Natural killer cell (primary cell): ENCODE measurements at regions of chr2 and their contacts with region 1.

Region 1: DNA sequence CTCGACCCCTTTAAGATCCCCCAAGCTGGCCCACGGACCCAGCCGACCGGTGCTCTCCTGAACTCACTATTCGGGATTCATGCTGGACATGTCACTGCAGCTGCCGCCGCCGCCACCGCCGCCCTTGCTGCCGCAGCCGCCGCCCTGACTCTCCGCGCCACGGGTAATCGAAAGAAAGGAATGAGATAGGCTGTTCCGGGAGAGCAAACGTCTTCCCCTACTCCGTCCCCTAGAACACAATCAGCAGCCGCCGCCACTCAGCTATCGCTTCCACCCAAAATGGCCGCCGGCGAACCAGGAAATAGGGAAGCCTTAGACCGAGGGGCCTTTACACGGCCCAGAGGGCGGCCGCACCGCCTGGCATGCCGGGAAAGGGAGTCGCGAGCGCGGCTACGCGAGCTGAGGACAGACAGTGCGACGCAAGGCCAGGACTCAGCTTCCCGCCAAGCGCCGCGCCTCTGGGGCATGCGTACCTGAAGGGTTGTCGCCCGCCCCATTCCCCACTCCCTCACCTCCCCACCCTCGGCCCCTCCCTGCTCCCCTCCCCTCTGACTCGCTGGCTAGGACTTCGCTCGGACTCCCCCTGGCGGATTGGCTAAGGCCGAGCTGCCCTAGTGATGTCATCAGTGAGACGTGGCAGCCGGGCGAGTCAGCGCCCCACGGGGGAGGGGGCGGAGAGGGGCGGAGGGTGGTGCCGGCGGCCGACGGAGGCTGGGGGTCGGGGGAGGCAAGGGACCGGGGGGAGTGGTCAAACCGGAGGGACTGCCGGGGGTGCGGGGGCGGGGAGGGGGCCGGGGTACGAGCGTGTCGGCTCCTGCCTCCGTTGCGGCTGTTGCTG is at the start of gene RAB1A:
- DNase-seq: peak; percentile 95 to 100
- ATAC-seq: peak; percentile 87 to 96 (median 87)
- H3K4me3 ChIP-seq: peak within 1 kb of the TSS; percentile 84
- H3K4me3 Mint-ChIP-seq: peak within 1 kb of the TSS; percentile 100
- H3K27ac ChIP-seq: peak within 1 kb of the TSS; percentile 94
- H3K27ac Mint-ChIP-seq: peak within 1 kb of the TSS; percentile 99
- H3K4me1 ChIP-seq: peaks cover 30% of the 10 kb centered on the region
- H3K4me1 Mint-ChIP-seq: peaks cover 38 to 47% of the 10 kb centered on the region in 2 donors
- H3K27me3 ChIP-seq: no peaks in the 10 kb centered on the region
- H3K27me3 Mint-ChIP-seq: no peaks in the 10 kb centered on the region
- CTCF ChIP-seq: peak; percentile 9
- total RNA-seq, gene RAB1A: 83.5 to 101 (median 93.6) TPM

Region 2: GRCh38 chr2:64439194-64439593 is 690.9 kb before region 1 on chr2:
- intact Hi-C with region 1: no loop called
- DNase-seq: no peak
- ATAC-seq: no peak
- H3K4me3 ChIP-seq: no peak overlapping the region
- H3K4me3 Mint-ChIP-seq: no peak overlapping the region
- H3K27ac ChIP-seq: no peak overlapping the region
- H3K27ac Mint-ChIP-seq: no peak overlapping the region
- H3K4me1 ChIP-seq: no peaks in the 10 kb centered on the region
- H3K4me1 Mint-ChIP-seq: no peaks in the 10 kb centered on the region
- H3K27me3 ChIP-seq: peaks cover 2% of the 10 kb centered on the region
- H3K27me3 Mint-ChIP-seq: peaks cover 29% of the 10 kb centered on the region in 2 donors
- CTCF ChIP-seq: no peak

Region 3: DNA sequence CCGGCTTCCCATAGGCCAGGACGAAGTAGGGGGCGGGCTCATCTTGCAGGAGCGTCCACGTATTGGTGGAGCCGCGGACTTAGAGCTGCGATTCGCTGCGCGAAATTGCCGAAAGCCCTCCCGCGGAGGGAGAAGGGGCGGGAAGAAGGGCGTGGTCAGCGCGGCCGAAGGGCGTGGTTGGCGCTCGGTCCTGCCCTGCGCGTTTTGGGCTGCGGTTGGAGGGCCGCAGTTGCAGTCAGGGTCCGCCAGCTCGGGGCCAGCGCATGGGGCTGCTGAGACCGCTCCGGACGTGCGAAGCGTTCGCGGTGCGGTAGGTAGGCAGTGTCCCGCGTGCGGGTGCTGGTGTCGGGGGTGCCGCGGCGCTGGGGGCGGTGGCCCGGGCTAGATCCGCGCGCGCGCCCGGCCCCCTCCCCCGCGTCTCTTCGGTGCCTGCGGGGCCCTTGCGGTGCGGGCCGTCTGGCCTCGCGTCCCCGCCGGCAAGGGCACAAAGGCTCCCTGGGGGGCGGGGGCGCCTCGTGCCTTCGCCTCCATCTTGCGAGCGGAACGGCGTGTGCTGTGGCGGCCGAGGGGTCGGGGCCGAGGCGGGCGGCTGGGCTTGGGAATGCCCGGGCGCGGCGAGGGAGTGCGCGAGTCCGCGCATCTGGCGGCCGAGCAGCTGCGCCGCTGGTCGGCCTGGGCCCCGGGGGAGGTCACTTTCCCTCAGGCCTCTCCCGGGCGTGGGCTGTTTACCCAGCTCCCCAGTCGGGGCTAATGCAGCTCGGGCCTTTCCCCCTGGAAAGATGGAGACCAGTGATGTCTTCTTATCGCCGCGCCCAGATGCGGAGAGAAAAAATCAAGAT is 73.6 kb before region 1 on chr2 and contains the start of gene CEP68:
- intact Hi-C with region 1: loop called (anchors 2 kb)
- DNase-seq: peak; percentile 59 to 95
- ATAC-seq: peak; percentile 95 to 99 (median 95)
- H3K4me3 ChIP-seq: peak within 1 kb of the TSS; percentile 71
- H3K4me3 Mint-ChIP-seq: peak within 1 kb of the TSS; percentile 97
- H3K27ac ChIP-seq: peak within 1 kb of the TSS; percentile 68
- H3K27ac Mint-ChIP-seq: peak within 1 kb of the TSS; percentile 86 to 93
- H3K4me1 ChIP-seq: peaks cover 35% of the 10 kb centered on the region
- H3K4me1 Mint-ChIP-seq: peaks cover 30 to 36% of the 10 kb centered on the region in 2 donors
- H3K27me3 ChIP-seq: no peaks in the 10 kb centered on the region
- H3K27me3 Mint-ChIP-seq: no peaks in the 10 kb centered on the region
- CTCF ChIP-seq: no peak
- total RNA-seq, gene CEP68: 5.6 to 8.3 (median 5.8) TPM